Activated T-helper 2 cell treated with anti-CD3 and anti-CD28 coated beads, Interferon-gamma antibody, Interleukin-2, Interleukin-4, amounts not matched to agents 10 μg/mL and 5 μg/mL and 100 μg/mL, durations not matched to agents 14 hours and 24 hours and 36 hours (primary cell): ENCODE measurements at regions of chr3 and their contacts with region 1.

Region 1: GRCh38 chr3:28924744-28925360 is 356.0 kb upstream of the RBMS3 start:
- DNase-seq: no peak
- H3K4me3 Mint-ChIP-seq: no peak overlapping the region
- H3K27ac Mint-ChIP-seq: no peak overlapping the region
- H3K4me1 Mint-ChIP-seq: no peaks in the 10 kb centered on the region
- H3K27me3 Mint-ChIP-seq: peaks cover 6% of the 10 kb centered on the region

Region 2: DNA sequence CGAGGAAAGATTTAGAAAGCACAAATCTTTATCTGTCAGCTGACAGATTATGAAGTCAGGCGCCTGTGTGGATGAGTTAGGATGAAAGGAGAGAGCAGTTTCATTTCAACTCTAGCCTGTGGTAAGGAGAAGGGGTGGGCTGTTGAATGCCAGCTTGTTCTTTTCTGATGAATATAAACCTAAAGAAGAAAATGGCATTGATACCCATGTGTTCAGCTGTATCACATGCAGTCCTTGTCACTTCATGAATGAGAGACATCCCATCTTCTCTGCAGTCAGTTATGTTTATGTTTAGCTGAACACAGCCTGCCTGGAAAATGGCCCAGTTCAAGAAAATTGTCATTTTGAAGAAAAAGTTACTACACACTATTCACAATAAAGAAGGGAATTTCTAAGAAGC is 10.3 kb after region 1 on chr3:
- intact Hi-C with region 1: loop called (anchors 1 kb)
- DNase-seq: no peak
- H3K4me3 Mint-ChIP-seq: peak overlapping the region; percentile 3
- H3K27ac Mint-ChIP-seq: peak overlapping the region; percentile 77
- H3K4me1 Mint-ChIP-seq: peaks cover 27% of the 10 kb centered on the region
- H3K27me3 Mint-ChIP-seq: no peaks in the 10 kb centered on the region

Region 3: GRCh38 chr3:28940530-28940929 is 15.7 kb after region 1 on chr3:
- intact Hi-C with region 1: loop called (anchors 1 kb)
- DNase-seq: no peak
- H3K4me3 Mint-ChIP-seq: no peak overlapping the region
- H3K27ac Mint-ChIP-seq: no peak overlapping the region
- H3K4me1 Mint-ChIP-seq: peaks cover 21% of the 10 kb centered on the region
- H3K27me3 Mint-ChIP-seq: no peaks in the 10 kb centered on the region

Region 4: DNA sequence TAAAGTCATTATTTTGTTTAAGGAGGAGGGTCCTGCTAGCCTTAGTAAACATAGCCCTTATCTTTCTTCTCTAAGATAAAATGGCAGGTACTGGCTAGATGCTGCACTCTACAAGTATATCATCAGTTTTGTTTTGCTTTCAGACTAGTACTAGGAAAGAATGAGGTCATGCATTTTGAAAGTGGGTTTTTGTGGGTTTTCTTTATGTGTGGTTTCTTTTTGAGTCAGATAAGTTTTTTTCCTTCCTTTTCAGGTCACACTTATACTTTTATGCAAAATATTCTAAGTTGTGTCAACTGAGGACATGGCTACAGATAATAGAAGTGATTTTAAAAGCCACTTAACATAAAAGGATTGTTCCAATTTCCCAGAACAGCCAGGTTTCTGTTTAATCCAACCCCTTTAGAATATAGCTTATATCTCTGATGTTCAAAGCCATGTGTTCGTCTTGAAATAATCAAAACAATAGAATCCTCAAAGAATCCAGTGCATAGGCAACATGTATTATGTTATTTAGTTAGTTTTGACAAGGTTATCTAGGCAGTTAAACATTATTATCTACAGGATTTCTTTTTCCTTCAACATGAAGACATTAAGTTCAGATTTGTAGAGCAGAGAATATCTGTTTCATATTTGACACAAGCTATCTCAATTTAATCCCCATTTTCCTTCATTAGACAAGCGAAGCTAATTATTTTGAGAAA is 762.2 kb after region 1 on chr3:
- intact Hi-C with region 1: loop called (anchors 5 kb)
- DNase-seq: no peak
- H3K4me3 Mint-ChIP-seq: no peak overlapping the region
- H3K27ac Mint-ChIP-seq: no peak overlapping the region
- H3K4me1 Mint-ChIP-seq: peaks cover 6% of the 10 kb centered on the region
- H3K27me3 Mint-ChIP-seq: peaks cover 5% of the 10 kb centered on the region